ENCODE measurements at regions of chr3 and their contacts with region 1.

Region 1: GRCh38 chr3:52685709-52686691 is at the starts of genes GNL3 and PBRM1:
- DNase-seq: peak; percentile 96
- ATAC-seq: peak; percentile 92
- total RNA-seq, gene GNL3: 27.2 TPM
- total RNA-seq, gene PBRM1: 45.1 TPM

Region 2: GRCh38 chr3:52468336-52468735 is 217.7 kb before region 1 on chr3:
- intact Hi-C with region 1: loop called (anchors 10 kb)
- DNase-seq: peak; percentile 40
- ATAC-seq: peak; percentile 3